Activated B cell treated with CpG ODN at 0.5 μM for 24 hours (primary cell): ENCODE measurements at regions of chr1 and their contacts with region 1.

Region 1: GRCh38 chr1:9615316-9616063 is 26.8 kb downstream of the TMEM201 start:
- DNase-seq: peak; percentile 47
- ATAC-seq: peak; percentile 96
- H3K4me3 Mint-ChIP-seq: no peak overlapping the region
- H3K27ac Mint-ChIP-seq: no peak overlapping the region
- H3K4me1 Mint-ChIP-seq: peaks cover 4% of the 10 kb centered on the region
- H3K27me3 Mint-ChIP-seq: no peaks in the 10 kb centered on the region
- CTCF ChIP-seq: peak; percentile 43

Region 2: DNA sequence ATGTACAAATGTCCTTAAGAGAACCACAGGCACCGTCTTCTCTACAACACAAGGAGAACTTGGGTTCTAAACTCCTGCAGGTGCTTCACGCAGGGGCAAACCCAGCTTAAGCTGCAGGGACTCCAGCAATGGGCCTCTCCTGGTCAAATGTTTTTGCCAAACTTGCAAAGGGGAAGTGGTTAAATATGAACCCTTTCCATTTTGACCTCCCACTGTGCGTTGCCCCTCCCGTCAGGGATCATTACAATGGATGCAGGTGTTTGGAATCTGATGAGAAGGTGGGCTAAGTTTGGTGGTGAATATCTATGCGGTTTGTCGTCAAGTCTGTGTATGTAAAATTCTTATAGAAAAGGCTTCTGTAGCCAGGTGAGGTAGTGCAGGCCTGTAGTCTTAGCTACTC is 105.4 kb before region 1 on chr1:
- CTCF ChIA-PET with region 1: no interaction called
- POLR2A ChIA-PET with region 1: no interaction called
- intact Hi-C with region 1: no loop called
- DNase-seq: no peak
- ATAC-seq: no peak
- H3K4me3 Mint-ChIP-seq: no peak overlapping the region
- H3K27ac Mint-ChIP-seq: no peak overlapping the region
- H3K4me1 Mint-ChIP-seq: no peaks in the 10 kb centered on the region
- H3K27me3 Mint-ChIP-seq: no peaks in the 10 kb centered on the region
- CTCF ChIP-seq: no peak

Region 3: GRCh38 chr1:9724706-9725476 is 109.4 kb after region 1 on chr1:
- CTCF ChIA-PET with region 1: interaction called, 28 read pairs
- POLR2A ChIA-PET with region 1: interaction called, 3 read pairs
- intact Hi-C with region 1: no loop called
- DNase-seq: peak; percentile 62
- ATAC-seq: peak; percentile 70
- H3K4me3 Mint-ChIP-seq: no peak overlapping the region
- H3K27ac Mint-ChIP-seq: peak overlapping the region; percentile 74
- H3K4me1 Mint-ChIP-seq: peaks cover 21% of the 10 kb centered on the region
- H3K27me3 Mint-ChIP-seq: no peaks in the 10 kb centered on the region
- CTCF ChIP-seq: peak; percentile 62